Right ventricle myocardium inferior (tissue), 1 donor: ENCODE measurements at regions of chr6 and their contacts with region 1.

Region 1: DNA sequence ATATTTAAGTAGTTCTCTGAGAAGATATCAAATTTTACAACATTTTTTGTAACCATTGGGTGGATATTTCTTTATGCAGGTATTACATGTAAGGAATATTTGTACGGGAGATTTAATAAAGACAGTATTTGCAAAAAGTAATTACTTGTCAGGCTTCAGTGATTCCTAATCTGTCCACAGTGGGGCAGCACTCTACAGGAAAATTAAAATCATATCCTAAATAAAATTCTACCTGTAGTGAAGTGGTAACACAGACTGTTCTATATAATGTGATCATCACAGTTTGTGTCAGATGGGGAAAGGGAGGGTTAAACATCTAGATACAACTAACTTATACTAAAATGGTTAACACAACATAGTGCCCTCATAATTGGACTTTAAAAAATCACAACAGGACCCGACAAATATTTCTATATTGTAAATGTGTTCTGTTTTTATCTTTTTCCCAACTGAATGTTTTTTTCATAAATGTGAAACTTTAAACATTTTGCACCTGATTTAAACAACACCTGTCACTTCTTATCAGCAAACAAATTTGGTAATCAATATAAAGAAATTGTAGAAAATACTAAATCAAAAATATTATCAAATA is 145.6 kb upstream of the MANEA start:
- DNase-seq: no peak
- ATAC-seq: no peak

Region 2: DNA sequence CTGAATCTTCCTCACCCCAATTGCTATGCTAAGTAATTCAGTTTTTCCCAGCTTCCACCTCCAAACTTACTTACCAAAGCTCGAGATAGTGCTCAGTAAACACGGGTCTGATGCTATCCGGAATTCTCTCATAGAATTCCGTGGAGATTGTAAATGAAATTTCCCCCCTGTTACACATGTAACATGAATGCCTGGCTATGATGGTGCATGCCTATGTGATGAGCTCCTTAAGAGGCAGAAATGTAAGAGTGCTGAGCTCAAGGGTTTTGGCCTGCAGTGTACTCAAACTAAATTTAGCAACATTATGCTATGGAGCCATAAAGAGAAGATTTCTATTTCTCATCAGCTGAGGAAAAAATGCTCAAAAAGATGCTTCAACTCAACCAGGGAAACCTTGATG is 450.6 kb after region 1 on chr6:
- intact Hi-C with region 1: loop called (anchors 10 kb)
- DNase-seq: peak; percentile 11
- ATAC-seq: no peak